ENCODE measurements at regions of chr4 and their contacts with region 1.

Region 1: GRCh38 chr4:139734875-139735380 is 69.3 kb downstream of the MGST2 start:
- DNase-seq: peak; percentile 84
- H3K4me3 ChIP-seq: peak overlapping the region; percentile 41
- H3K27ac ChIP-seq: peak overlapping the region; percentile 2
- H3K4me1 ChIP-seq: peaks cover 13% of the 10 kb centered on the region
- H3K27me3 ChIP-seq: no peaks in the 10 kb centered on the region
- CTCF ChIP-seq: peak; percentile 75

Region 2: DNA sequence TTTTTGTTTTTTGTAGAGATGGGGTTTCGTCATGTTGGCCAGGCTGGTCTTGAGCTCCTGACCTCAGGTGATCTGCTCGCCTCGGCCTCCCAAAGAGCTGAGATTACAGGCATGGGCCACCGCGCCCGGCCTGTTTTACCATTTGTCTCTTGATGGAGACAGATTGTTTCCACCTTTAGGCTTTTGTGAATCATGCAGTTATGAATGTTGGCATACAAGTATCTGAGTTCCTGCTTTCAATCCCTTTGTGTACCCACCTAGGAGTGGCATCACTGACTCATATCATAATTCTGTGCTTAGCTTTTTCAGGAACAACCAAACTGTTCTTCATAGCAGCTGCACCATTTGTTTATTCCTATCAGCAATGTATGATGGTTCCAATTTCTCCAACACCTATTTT is 89.5 kb before region 1 on chr4:
- CTCF ChIA-PET with region 1: no interaction called
- POLR2A ChIA-PET with region 1: interaction called, 10 read pairs
- intact Hi-C with region 1: no loop called
- DNase-seq: no peak
- H3K4me3 ChIP-seq: no peak overlapping the region
- H3K27ac ChIP-seq: no peak overlapping the region
- H3K4me1 ChIP-seq: no peaks in the 10 kb centered on the region
- H3K27me3 ChIP-seq: no peaks in the 10 kb centered on the region
- CTCF ChIP-seq: no peak

Region 3: GRCh38 chr4:140052050-140052449 is 317.1 kb after region 1 on chr4:
- CTCF ChIA-PET with region 1: no interaction called
- POLR2A ChIA-PET with region 1: no interaction called
- intact Hi-C with region 1: loop called (anchors 2 kb)
- DNase-seq: peak; percentile 47
- H3K4me3 ChIP-seq: no peak overlapping the region
- H3K27ac ChIP-seq: no peak overlapping the region
- H3K4me1 ChIP-seq: peaks cover 11% of the 10 kb centered on the region
- H3K27me3 ChIP-seq: no peaks in the 10 kb centered on the region
- CTCF ChIP-seq: peak; percentile 77

Region 4: DNA sequence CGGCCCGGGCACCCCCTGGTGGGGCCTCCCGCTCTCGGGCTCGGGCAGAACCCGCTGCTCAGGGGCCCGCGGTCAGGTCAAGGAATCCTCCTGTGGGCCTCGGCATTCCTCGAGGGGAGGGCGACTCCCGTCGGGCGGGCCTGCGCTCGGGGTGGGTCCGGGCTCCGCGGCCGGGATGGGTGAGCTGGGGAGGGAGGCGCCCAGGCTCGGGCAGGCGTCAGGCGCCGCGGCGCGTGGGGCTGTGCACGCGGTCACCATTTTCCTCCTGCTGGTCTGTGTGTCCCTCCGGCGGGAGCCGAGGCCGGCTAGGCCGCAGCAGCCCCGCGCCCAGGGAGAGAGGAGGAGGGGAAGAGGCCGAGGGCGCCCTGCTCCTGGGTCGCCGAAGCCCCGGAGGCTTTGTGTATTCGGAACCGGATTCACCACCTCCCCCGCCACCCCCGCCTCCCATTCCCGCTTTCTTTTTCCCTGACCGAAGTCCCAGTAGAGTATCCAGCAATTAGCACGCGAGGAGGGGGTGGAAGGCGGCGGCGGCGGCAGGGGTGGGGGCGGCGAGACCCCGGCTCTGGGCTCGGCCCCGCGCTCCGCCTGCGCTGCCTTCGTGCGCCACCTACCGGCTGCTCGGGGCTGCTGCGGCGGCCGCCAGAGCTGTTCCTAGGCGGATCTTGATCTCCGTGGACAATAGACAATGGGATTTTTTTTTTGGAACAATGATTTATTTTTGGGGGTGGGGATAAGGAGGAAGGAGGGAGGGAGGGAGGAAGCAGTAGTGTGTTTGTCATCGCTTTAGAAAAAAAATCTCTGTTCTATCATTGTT is 518.0 kb after region 1 on chr4:
- CTCF ChIA-PET with region 1: interaction called, 4 read pairs
- POLR2A ChIA-PET with region 1: no interaction called
- intact Hi-C with region 1: loop called (anchors 2 kb)
- DNase-seq: peak; percentile 76
- H3K4me3 ChIP-seq: peak overlapping the region; percentile 60
- H3K27ac ChIP-seq: peak overlapping the region; percentile 81
- H3K4me1 ChIP-seq: peaks cover 13% of the 10 kb centered on the region
- H3K27me3 ChIP-seq: no peaks in the 10 kb centered on the region
- CTCF ChIP-seq: peak; percentile 88

Measured in A673 (cell line).